ENCODE measurements at regions of chr1 and their contacts with region 1.

Region 1: DNA sequence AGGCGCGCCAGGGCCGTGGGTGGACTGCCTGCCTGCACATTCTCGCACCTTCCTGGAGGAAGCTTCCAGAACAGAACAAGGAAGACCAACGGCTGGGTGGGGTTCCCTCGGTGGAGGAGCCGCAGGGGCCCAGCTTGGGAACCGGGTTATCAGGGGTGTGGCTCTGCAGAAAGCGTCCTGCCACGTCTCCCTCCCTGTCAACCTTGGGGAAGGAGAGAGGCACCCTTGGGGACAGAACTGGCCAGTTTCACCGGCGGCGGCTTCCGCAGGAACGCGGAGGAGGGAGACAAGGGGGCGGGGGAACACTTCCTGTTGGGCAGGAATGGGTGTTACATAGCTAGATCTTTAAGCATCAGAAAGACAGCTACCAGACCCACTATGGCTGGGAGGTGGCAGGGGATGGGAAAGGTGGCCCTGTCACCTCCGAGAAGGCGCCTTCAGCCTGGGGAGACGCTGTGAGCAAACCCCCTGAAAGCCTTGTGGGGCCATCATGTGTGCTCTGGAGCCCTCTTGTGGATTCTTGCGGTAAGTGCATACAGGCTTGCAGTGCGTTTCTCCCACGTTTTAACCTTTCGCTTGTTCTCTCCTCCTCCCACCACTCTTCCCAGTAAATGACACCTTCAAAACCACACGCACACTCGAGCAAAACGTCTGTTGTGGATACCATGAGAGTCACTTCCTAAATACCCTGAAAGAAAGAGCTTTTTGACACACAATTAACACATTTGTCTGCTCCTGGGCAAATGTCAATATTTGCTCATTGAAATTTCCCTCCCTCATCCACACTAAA is 3.8 kb upstream of the PLEKHA6 start:
- DNase-seq: peak; percentile 74
- H3K4me3 ChIP-seq: peak overlapping the region; percentile 41 to 56
- H3K27ac ChIP-seq: peak overlapping the region in 1 of 2 experiments; percentile 56; a peak in 1 of 4 replicates
- H3K4me1 ChIP-seq: peaks cover 4 to 25% of the 10 kb centered on the region in 2 experiments; a peak in 1 of 4 replicates
- H3K27me3 ChIP-seq: peaks cover 7% of the 10 kb centered on the region; the same call in 1 of the 2 replicates
- CTCF ChIP-seq: peak; percentile 98
- EP300 ChIP-seq: no peak
- RAD21 ChIP-seq: peak; percentile 97

Region 2: GRCh38 chr1:204018463-204018862 is 345.1 kb before region 1 on chr1:
- CTCF ChIA-PET with region 1: no interaction called
- POLR2A ChIA-PET with region 1: no interaction called
- DNase-seq: no peak
- H3K4me3 ChIP-seq: no peak overlapping the region
- H3K27ac ChIP-seq: no peak overlapping the region
- H3K4me1 ChIP-seq: no peaks in the 10 kb centered on the region
- H3K27me3 ChIP-seq: no peaks in the 10 kb centered on the region
- CTCF ChIP-seq: no peak
- EP300 ChIP-seq: no peak
- RAD21 ChIP-seq: no peak

Region 3: DNA sequence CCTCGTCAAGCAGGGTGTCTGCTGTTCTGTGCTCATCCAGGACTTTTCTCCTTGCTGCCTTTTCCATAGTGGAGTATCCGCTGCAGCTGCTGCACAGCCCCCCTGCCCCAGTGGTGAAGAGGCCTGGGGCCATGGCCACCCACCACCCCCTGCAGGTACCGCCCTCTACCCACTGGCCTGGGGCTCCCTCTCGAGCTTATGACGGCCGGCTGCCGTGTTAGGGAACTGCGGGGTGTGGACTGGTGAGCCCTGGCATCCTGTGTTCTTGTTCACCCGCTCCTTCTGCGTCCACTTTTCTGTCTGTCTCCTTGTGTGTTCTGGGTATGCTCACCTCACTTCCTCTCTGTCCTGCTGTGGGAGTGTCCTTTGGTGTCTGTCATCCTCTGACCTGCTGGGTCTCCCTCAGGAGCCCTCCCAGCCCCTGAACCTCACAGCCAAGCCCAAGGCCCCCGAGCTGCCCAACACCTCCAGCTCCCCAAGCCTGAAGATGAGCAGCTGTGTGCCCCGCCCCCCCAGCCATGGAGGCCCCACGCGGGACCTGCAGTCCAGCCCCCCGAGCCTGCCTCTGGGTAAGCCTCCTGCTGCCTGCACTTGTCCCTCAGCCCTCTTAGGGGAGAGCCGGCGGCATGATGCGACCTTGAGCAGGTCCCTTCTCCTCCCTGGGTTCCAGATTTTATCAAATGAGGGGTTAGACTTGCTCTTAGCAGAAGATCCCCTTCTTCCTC is 241.5 kb before region 1 on chr1:
- CTCF ChIA-PET with region 1: no interaction called
- POLR2A ChIA-PET with region 1: no interaction called
- DNase-seq: no peak
- H3K4me3 ChIP-seq: no peak overlapping the region
- H3K27ac ChIP-seq: no peak overlapping the region
- H3K4me1 ChIP-seq: peaks cover 2 to 14% of the 10 kb centered on the region in 2 experiments; a peak in 1 of 4 replicates
- H3K27me3 ChIP-seq: no peaks in the 10 kb centered on the region
- CTCF ChIP-seq: no peak
- EP300 ChIP-seq: no peak
- RAD21 ChIP-seq: no peak

Region 4: GRCh38 chr1:204190212-204191211 is 173.0 kb before region 1 on chr1:
- CTCF ChIA-PET with region 1: interaction called, 19 read pairs
- POLR2A ChIA-PET with region 1: no interaction called
- DNase-seq: no peak
- H3K4me3 ChIP-seq: no peak overlapping the region
- H3K27ac ChIP-seq: no peak overlapping the region
- H3K4me1 ChIP-seq: peaks cover 0 to 4% of the 10 kb centered on the region in 2 experiments; a peak in 2 of 4 replicates
- H3K27me3 ChIP-seq: no peaks in the 10 kb centered on the region; the same call in 1 of the 2 replicates
- CTCF ChIP-seq: no peak
- EP300 ChIP-seq: no peak
- RAD21 ChIP-seq: no peak

Region 5: DNA sequence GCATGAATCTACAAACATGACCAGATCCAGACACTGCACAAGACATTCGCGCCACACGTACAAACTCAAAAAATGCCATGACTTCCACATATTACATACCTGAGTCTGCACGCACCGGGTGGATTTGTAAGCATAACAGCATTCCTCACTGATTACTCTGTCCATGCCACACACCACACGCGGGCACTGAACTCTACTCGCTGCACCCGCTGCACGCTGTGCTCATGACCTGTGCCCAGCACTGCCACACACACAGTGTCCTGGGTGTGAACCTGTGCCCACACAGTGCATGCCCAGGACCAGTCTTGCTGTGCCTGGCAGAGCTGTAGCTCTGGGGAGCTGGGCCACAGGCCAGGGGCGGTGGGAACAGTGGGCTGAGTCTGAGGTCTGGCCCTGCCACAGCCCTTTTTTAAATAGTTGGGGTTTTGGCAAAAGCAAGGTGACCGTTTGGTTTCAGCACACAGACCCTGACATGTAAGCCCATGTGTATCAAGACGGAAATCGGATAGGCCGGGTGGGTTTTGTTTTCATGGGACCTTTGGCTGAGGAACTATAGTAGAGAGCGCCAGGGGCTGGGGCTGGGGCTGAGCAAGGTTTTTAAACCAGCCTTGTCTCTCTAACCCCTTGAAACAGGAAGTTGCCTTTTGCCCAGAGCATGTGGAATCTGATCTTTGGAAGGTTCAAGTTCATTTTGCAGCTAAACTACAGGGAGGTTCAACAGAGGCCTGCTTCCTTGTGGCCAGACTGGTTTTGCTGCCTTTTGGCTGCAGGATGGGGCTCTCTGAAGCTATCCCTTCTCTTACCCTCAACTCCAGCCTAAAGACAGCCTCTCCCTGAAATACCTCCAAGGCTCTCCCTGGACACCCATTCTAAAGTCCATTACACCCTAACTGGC is 137.4 kb before region 1 on chr1:
- CTCF ChIA-PET with region 1: interaction called, 19 read pairs
- POLR2A ChIA-PET with region 1: no interaction called
- DNase-seq: no peak
- H3K4me3 ChIP-seq: no peak overlapping the region
- H3K27ac ChIP-seq: no peak overlapping the region
- H3K4me1 ChIP-seq: peaks cover 0 to 13% of the 10 kb centered on the region in 2 experiments; a peak in 2 of 4 replicates
- H3K27me3 ChIP-seq: no peaks in the 10 kb centered on the region
- CTCF ChIP-seq: no peak
- EP300 ChIP-seq: no peak
- RAD21 ChIP-seq: no peak

Region 6: GRCh38 chr1:204286831-204287421 is 76.6 kb before region 1 on chr1:
- CTCF ChIA-PET with region 1: interaction called, 258 read pairs
- POLR2A ChIA-PET with region 1: interaction called, 70 read pairs
- DNase-seq: peak; percentile 51
- H3K4me3 ChIP-seq: peak overlapping the region in 1 of 2 experiments; percentile 54; a peak in 2 of 4 replicates
- H3K27ac ChIP-seq: peak overlapping the region in 1 of 2 experiments; percentile 98; a peak in 2 of 4 replicates
- H3K4me1 ChIP-seq: peaks cover 0 to 54% of the 10 kb centered on the region in 2 experiments; a peak in 2 of 4 replicates
- H3K27me3 ChIP-seq: peaks cover 21% of the 10 kb centered on the region
- CTCF ChIP-seq: no peak
- EP300 ChIP-seq: peak in 1 of 2 experiments; percentile 56; a peak in 1 of 4 replicates
- RAD21 ChIP-seq: no peak

Region 7: DNA sequence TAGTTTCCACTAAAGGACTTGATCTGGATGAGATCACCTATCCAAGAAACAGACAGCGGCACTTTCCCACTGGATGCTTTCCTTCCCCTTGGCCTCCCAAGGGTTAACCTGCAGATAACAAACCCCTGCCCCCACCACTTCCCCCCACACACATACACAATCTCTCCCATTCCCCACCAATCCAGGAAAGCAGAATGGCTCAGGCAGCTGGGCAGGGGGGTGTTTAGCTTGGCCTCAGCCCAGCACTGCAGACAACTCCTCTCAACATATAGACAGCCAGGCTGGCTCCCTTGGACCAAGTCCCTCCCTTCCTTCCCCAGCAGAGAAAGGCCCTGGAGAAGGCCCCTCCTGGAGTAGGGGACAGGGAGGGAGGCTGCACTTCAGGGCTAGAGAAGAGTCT is 28.4 kb before region 1 on chr1:
- CTCF ChIA-PET with region 1: interaction called, 12 read pairs
- POLR2A ChIA-PET with region 1: interaction called, 13 read pairs
- DNase-seq: peak; percentile 76
- H3K4me3 ChIP-seq: no peak overlapping the region
- H3K27ac ChIP-seq: peak overlapping the region; percentile 32 to 99; a peak in 3 of 4 replicates
- H3K4me1 ChIP-seq: peaks cover 0 to 81% of the 10 kb centered on the region in 2 experiments; a peak in 2 of 4 replicates
- H3K27me3 ChIP-seq: no peaks in the 10 kb centered on the region; the same call in 1 of the 2 replicates
- CTCF ChIP-seq: no peak
- EP300 ChIP-seq: peak in 1 of 2 experiments; percentile 58; a peak in 2 of 4 replicates
- RAD21 ChIP-seq: peak; percentile 33

Region 8: DNA sequence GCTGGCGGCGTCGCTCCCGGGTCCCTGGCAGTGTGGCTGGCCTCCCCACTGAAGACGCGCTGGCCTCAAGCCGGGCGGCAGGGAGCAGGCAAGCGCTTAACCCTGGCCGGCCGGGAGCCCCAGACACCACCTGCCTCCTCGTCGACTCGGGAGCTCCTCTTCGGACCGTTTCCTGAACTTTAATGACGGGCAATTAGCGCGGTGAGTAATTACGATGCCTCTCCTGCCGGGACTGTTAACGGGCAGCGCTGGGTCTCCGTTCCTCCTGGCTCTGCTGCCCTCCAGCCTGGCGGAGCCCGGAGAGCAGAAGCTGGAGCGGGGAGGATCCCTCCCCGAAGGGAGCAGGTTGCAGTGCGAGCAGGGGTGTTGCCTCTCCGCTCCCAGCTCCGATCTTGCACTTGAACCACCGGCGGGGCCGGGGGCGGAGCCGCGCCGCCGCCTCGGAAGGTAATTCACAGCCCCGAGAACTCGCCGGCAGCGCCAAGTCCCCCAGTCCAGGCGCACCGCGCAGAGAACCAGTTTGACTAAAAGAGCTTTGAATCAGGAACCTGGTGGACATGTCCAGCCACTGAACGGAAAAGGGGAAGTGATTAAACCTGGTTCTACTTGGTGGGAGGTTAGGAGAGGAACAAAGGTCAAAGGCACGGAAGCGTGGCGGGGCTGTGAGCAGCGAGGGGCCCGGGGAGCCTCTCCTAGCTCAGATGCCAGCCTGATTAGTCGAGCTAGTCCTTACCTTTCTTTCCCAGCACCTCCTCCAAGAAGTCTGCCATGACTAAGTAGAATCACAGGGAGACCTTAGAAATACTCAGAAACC is 14.5 kb after region 1 on chr1:
- CTCF ChIA-PET with region 1: interaction called, 100 read pairs
- POLR2A ChIA-PET with region 1: no interaction called
- DNase-seq: peak; percentile 81
- H3K4me3 ChIP-seq: peak overlapping the region; percentile 52 to 65
- H3K27ac ChIP-seq: no peak overlapping the region
- H3K4me1 ChIP-seq: peaks cover 0 to 20% of the 10 kb centered on the region in 2 experiments; a peak in 1 of 4 replicates
- H3K27me3 ChIP-seq: peaks cover 61% of the 10 kb centered on the region
- CTCF ChIP-seq: no peak
- EP300 ChIP-seq: no peak
- RAD21 ChIP-seq: no peak

Region 9: GRCh38 chr1:204417231-204417997 is 53.9 kb after region 1 on chr1:
- CTCF ChIA-PET with region 1: no interaction called
- POLR2A ChIA-PET with region 1: no interaction called
- DNase-seq: peak; percentile 65
- H3K4me3 ChIP-seq: peak overlapping the region; percentile 26 to 48; a peak in 3 of 4 replicates
- H3K27ac ChIP-seq: peak overlapping the region; percentile 90 to 99
- H3K4me1 ChIP-seq: peaks cover 10 to 29% of the 10 kb centered on the region in 2 experiments; a peak in 3 of 4 replicates
- H3K27me3 ChIP-seq: no peaks in the 10 kb centered on the region
- CTCF ChIP-seq: no peak
- EP300 ChIP-seq: peak; percentile 17 to 82; a peak in 3 of 4 replicates
- RAD21 ChIP-seq: no peak

Region 10: GRCh38 chr1:204453141-204453772 is 89.7 kb after region 1 on chr1:
- CTCF ChIA-PET with region 1: no interaction called
- POLR2A ChIA-PET with region 1: no interaction called
- DNase-seq: no peak
- H3K4me3 ChIP-seq: no peak overlapping the region
- H3K27ac ChIP-seq: no peak overlapping the region
- H3K4me1 ChIP-seq: no peaks in the 10 kb centered on the region; a peak in 2 of 4 replicates
- H3K27me3 ChIP-seq: no peaks in the 10 kb centered on the region
- CTCF ChIP-seq: no peak
- EP300 ChIP-seq: no peak
- RAD21 ChIP-seq: no peak

Region 11: DNA sequence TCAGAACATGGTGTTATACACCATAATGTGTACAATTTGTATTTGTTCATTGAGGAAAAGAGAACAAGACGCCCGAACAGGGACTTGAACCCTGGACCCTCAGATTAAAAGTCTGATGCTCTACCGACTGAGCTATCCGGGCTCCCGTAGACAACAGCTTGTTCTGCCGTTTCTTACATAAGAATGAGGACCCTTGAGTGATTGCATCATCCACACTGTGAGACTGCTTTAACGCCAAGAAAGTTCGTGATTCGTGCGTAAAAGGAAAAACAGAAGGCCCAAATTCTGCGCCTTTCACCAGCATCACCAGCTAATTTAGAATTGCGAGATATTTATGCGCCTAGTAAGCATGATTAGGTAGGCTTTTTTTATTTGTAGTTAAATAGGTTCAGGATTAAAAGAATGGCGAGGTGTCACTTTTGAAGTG is 143.4 kb after region 1 on chr1:
- CTCF ChIA-PET with region 1: interaction called, 12 read pairs
- POLR2A ChIA-PET with region 1: no interaction called
- DNase-seq: peak; percentile 43
- H3K4me3 ChIP-seq: peak overlapping the region; percentile 44 to 72
- H3K27ac ChIP-seq: peak overlapping the region; percentile 92 to 95
- H3K4me1 ChIP-seq: peaks cover 3 to 5% of the 10 kb centered on the region in 2 experiments; a peak in 2 of 4 replicates
- H3K27me3 ChIP-seq: no peaks in the 10 kb centered on the region
- CTCF ChIP-seq: no peak
- EP300 ChIP-seq: peak in 1 of 2 experiments; percentile 62; a peak in 1 of 4 replicates
- RAD21 ChIP-seq: no peak

Measured in SK-N-SH (cell line).